ENCODE measurements at regions of chr9 and their contacts with region 1.

Region 1: DNA sequence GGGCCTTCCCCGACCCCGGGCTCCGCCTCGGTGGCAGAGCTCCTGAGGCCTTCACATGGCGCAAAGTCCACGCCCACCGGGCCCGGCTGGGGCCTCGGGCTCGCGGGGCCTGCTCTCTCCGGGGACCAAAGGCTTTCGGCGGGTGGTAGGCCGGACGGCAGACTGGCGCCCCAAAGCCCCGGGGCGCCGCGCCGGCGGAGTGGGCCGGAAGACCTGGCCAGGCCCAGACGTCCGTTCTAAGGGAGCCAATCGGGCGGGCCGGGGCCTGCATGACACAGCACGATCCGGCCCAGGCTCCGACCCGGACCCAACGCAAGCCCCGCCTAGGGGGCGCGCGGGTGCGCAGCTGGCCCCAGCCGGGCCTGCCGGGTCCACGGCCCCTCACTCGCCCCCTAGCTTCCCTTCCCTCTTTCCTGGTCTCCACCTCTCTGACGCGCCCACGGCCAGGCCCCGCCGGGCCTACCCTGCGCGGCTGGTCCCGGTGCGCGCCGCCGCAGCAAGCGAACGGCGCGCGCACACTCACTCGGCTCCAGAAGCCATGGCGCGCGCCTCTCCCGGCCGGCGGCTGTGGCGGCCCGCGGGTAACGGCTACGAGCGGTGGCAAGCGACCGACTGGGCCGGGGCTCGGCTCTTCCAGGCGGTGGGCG is 488 bp downstream of the VCP start:
- DNase-seq: peak; percentile 40 to 87 (median 73)
- ATAC-seq: peak; percentile 49
- H3K4me3 ChIP-seq: peak overlapping the region; percentile 82 to 93
- H3K4me3 Mint-ChIP-seq: peak overlapping the region; percentile 93
- H3K27ac ChIP-seq: peak overlapping the region; percentile 91 to 94
- H3K27ac Mint-ChIP-seq: peak overlapping the region; percentile 97
- H3K4me1 ChIP-seq: peaks cover 49% of the 10 kb centered on the region
- H3K4me1 Mint-ChIP-seq: peaks cover 49% of the 10 kb centered on the region
- H3K27me3 ChIP-seq: no peaks in the 10 kb centered on the region
- H3K27me3 Mint-ChIP-seq: no peaks in the 10 kb centered on the region
- CTCF ChIP-seq: peak; percentile 43

Region 2: DNA sequence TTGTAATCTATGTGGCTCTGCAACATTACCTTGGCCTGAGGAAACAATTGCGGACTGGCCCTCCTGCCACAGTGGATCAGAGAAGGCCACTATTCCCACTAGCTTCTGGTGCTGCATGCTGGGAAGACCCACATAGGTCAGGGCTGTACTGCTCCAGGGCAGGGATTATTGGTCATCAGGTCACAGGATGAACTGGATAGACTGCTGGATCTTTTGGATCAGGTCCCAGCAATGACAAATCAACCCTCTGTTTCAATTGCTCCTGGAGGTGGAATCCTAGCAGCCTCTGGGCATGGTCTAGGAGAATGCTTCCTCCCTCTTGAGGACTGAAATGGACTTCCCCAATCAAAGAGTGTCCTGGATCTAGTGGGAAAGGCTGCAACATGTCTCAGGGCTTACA is 180.6 kb before region 1 on chr9:
- CTCF ChIA-PET with region 1: no interaction called
- POLR2A ChIA-PET with region 1: no interaction called
- intact Hi-C with region 1: no loop called
- DNase-seq: no peak
- ATAC-seq: no peak
- H3K4me3 ChIP-seq: no peak overlapping the region
- H3K4me3 Mint-ChIP-seq: no peak overlapping the region
- H3K27ac ChIP-seq: no peak overlapping the region
- H3K27ac Mint-ChIP-seq: no peak overlapping the region
- H3K4me1 ChIP-seq: no peaks in the 10 kb centered on the region
- H3K4me1 Mint-ChIP-seq: no peaks in the 10 kb centered on the region
- H3K27me3 ChIP-seq: no peaks in the 10 kb centered on the region
- H3K27me3 Mint-ChIP-seq: peaks cover 22% of the 10 kb centered on the region
- CTCF ChIP-seq: no peak

Region 3: DNA sequence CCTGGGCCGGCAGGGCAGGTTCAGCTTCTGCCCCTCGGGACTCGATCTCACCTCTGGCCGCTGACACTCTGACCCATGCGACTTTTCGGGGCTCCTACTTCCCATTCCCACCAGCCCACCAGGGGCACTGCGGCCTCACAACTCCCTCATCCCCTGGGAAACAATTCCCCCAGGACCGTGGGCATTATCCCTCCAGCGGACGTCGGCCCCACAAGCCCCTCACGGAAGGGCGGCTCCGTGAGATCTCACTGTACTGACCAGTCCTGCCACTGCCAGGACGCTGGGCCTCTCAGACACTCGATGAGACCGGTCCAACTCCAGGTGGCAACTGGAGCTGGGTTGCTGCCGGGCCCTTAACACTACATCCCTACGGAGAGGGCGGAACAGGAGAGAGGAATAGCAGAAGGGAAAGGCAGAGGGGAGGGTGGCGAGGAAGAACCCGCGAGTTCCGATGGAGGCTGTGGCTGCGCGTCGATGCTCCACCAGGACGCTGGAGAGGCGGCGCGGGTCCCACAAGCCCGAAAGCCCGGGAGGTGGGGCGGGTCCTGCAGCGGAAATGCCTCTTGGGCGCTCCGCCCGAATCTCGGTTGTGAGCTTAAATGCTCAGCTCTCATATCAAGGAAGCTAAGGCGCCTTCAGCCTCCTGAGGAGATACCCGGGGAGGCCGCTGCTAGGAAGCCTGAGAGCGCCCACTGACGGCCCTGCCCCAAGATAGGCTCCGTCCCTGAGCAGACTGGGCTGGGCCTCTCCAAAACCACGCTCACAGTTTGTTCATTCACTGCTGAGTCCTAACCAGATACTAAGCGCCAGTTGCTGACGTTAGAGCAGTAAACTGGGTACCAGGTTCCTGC is 35.9 kb before region 1 on chr9:
- CTCF ChIA-PET with region 1: no interaction called
- POLR2A ChIA-PET with region 1: no interaction called
- intact Hi-C with region 1: loop called in 1 of 2 experiments (anchors 1 kb)
- DNase-seq: peak in 8 of 9 experiments; percentile 6 to 58 (median 38)
- ATAC-seq: peak; percentile 81
- H3K4me3 ChIP-seq: peak overlapping the region in 1 of 2 experiments; percentile 28
- H3K4me3 Mint-ChIP-seq: peak overlapping the region; percentile 50
- H3K27ac ChIP-seq: no peak overlapping the region
- H3K27ac Mint-ChIP-seq: no peak overlapping the region
- H3K4me1 ChIP-seq: peaks cover 5% of the 10 kb centered on the region
- H3K4me1 Mint-ChIP-seq: peaks cover 4% of the 10 kb centered on the region
- H3K27me3 ChIP-seq: no peaks in the 10 kb centered on the region
- H3K27me3 Mint-ChIP-seq: no peaks in the 10 kb centered on the region
- CTCF ChIP-seq: no peak

Region 4: DNA sequence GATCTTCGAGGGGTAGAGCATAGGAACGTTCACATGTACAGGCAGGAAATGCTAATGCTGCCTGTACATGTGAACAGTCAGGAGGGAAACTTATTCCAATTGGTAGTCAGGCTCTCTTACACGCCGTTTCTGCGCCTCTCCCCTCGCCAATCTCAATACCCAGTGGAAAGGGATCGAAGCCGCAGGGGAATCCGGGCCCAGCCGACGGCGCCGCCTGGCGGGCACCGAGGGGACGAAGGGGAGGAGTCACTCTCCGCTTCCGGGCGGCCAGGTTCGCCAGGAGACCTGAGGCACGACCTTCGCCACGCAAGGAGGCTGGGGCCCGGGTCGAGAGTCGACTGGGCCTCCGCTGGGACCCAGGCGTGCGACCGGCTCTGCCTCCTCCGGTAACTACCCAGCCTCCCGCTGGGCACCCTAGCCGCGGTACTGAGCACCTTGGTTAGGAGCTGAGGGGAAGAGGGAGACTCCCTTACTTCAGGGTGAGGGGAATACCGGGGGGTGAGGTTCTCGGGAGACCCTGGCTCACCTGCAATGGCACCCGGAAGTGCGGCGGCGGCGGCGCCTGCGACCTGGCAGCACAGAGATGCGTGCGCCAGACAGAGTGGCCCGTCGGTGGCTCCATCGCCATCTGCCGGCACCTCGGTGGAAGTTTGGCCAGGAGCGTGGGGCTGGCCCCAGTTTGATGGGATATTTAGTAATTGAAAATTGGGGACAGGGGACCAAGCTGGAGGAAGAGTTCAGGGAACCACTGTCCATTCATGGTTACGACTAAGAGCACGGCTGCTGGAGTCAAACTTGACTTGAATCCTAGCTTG is 24.3 kb after region 1 on chr9 and contains the start of gene PIGO:
- CTCF ChIA-PET with region 1: interaction called, 147 read pairs
- POLR2A ChIA-PET with region 1: interaction called, 27 read pairs
- intact Hi-C with region 1: loop called (anchors 1 kb)
- DNase-seq: peak; percentile 78 to 94 (median 89)
- ATAC-seq: peak; percentile 90
- H3K4me3 ChIP-seq: peak within 1 kb of the TSS; percentile 95 to 99
- H3K4me3 Mint-ChIP-seq: peak within 1 kb of the TSS; percentile 88
- H3K27ac ChIP-seq: peak within 1 kb of the TSS; percentile 95 to 100
- H3K27ac Mint-ChIP-seq: peak within 1 kb of the TSS; percentile 95
- H3K4me1 ChIP-seq: peaks cover 24% of the 10 kb centered on the region
- H3K4me1 Mint-ChIP-seq: peaks cover 32% of the 10 kb centered on the region
- H3K27me3 ChIP-seq: no peaks in the 10 kb centered on the region
- H3K27me3 Mint-ChIP-seq: no peaks in the 10 kb centered on the region
- CTCF ChIP-seq: peak; percentile 75
- total RNA-seq, gene PIGO: 15.1 to 16.4 TPM

Region 5: GRCh38 chr9:35111001-35111933 is 39.3 kb after region 1 on chr9:
- CTCF ChIA-PET with region 1: interaction called, 3 read pairs
- POLR2A ChIA-PET with region 1: interaction called, 16 read pairs
- intact Hi-C with region 1: loop called (anchors 1 kb)
- DNase-seq: peak; percentile 88 to 98 (median 96)
- ATAC-seq: peak; percentile 78
- H3K4me3 ChIP-seq: peak overlapping the region; percentile 64 to 73
- H3K4me3 Mint-ChIP-seq: peak overlapping the region; percentile 82
- H3K27ac ChIP-seq: peak overlapping the region; percentile 39 to 79
- H3K27ac Mint-ChIP-seq: peak overlapping the region; percentile 85
- H3K4me1 ChIP-seq: peaks cover 45% of the 10 kb centered on the region
- H3K4me1 Mint-ChIP-seq: peaks cover 53% of the 10 kb centered on the region
- H3K27me3 ChIP-seq: no peaks in the 10 kb centered on the region
- H3K27me3 Mint-ChIP-seq: no peaks in the 10 kb centered on the region
- CTCF ChIP-seq: no peak